ENCODE measurements at regions of chr11 and their contacts with region 1.

Region 1: GRCh38 chr11:67345920-67346799 is 7.2 kb downstream of the POLD4 start:
- DNase-seq: peak; percentile 92
- H3K4me3 ChIP-seq: no peak overlapping the region
- H3K27ac ChIP-seq: peak overlapping the region; percentile 77
- H3K4me1 ChIP-seq: peaks cover 21% of the 10 kb centered on the region
- H3K27me3 ChIP-seq: no peaks in the 10 kb centered on the region
- CTCF ChIP-seq: peak; percentile 79 to 97

Region 2: GRCh38 chr11:67303132-67303834 is 42.9 kb before region 1 on chr11 and contains the start of gene SSH3:
- CTCF ChIA-PET with region 1: no interaction called
- dilution Hi-C with region 1: loop called (anchors 5 kb)
- in situ Hi-C with region 1: no loop called
- intact Hi-C with region 1: no loop called
- DNase-seq: peak; percentile 70
- H3K4me3 ChIP-seq: peak within 1 kb of the TSS; percentile 81 to 96 (median 89)
- H3K27ac ChIP-seq: peak within 1 kb of the TSS; percentile 30
- H3K4me1 ChIP-seq: peaks cover 18% of the 10 kb centered on the region
- H3K27me3 ChIP-seq: no peaks in the 10 kb centered on the region
- CTCF ChIP-seq: no peak
- total RNA-seq, gene SSH3: 47.0 to 86.9 TPM

Region 3: GRCh38 chr11:67382276-67383136 is 36.3 kb after region 1 on chr11:
- CTCF ChIA-PET with region 1: interaction called, 11 read pairs
- dilution Hi-C with region 1: loop called (anchors 5 kb)
- in situ Hi-C with region 1: no loop called
- intact Hi-C with region 1: loop called (anchors 1 kb)
- DNase-seq: peak; percentile 58
- H3K4me3 ChIP-seq: no peak overlapping the region
- H3K27ac ChIP-seq: no peak overlapping the region
- H3K4me1 ChIP-seq: peaks cover 32% of the 10 kb centered on the region
- H3K27me3 ChIP-seq: no peaks in the 10 kb centered on the region
- CTCF ChIP-seq: peak; percentile 99 to 100

Region 4: DNA sequence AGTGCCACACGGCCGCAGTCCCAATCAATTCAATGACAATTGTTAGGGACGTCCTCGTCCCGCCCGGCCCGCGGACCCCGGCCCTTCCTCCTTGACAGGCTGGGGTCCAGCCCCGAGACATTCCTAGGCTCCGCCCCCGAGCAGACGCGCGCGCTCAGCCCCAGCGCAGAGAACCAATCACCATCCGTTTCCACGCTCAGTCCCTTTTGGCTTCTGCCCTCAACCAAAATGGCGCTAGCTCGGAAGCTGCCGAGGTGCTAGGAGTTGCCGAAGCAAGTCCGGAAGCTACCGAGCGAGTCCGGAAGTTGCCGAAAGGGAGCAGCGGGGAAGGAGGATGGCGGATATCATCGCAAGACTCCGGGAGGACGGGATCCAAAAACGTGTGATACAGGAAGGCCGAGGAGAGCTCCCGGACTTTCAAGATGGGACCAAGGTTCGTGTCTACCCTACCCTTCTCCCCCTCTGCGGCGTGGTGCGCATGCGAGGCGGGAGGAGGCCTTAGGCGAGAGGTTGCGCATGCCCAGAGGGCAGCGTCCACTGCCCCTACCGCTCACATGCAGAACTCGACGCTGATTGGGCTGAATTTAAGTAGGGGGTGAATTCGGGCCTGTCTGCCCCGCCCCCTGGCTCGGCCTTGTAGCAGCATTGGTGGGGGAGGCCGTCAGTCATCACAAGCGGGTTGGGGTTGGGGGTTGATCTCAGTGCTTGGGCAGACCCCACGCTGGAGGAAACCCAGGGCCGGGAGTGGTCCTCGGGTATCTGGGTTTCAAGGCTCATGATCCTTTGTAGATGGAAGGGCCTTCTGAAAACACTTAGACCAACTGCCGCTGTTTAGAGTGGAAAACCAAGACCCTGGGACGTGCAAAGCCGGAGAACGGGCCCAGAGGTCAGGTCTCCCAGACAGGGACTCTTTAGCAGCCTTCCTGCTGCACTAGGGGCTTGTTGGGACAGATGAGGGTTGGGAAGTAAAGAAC is 137.0 kb after region 1 on chr11 and contains the start of gene AIP:
- CTCF ChIA-PET with region 1: no interaction called
- dilution Hi-C with region 1: loop called (anchors 5 kb)
- in situ Hi-C with region 1: no loop called
- intact Hi-C with region 1: no loop called
- DNase-seq: peak; percentile 96
- H3K4me3 ChIP-seq: peak within 1 kb of the TSS; percentile 56 to 78 (median 73)
- H3K27ac ChIP-seq: peak within 1 kb of the TSS; percentile 66
- H3K4me1 ChIP-seq: peaks cover 12% of the 10 kb centered on the region
- H3K27me3 ChIP-seq: no peaks in the 10 kb centered on the region
- CTCF ChIP-seq: peak; percentile 5 to 34
- total RNA-seq, gene AIP: 34.5 to 36.2 TPM

Region 5: GRCh38 chr11:67606492-67607201 is 260.5 kb after region 1 on chr11 and contains the start of gene NDUFV1:
- CTCF ChIA-PET with region 1: no interaction called
- dilution Hi-C with region 1: no loop called
- in situ Hi-C with region 1: no loop called
- intact Hi-C with region 1: no loop called
- DNase-seq: peak; percentile 88
- H3K4me3 ChIP-seq: peak within 1 kb of the TSS; percentile 67 to 88 (median 72)
- H3K27ac ChIP-seq: peak within 1 kb of the TSS; percentile 67
- H3K4me1 ChIP-seq: peaks cover 3% of the 10 kb centered on the region
- H3K27me3 ChIP-seq: no peaks in the 10 kb centered on the region
- CTCF ChIP-seq: peak; percentile 20 to 68
- total RNA-seq, gene NDUFV1: 144 to 163 TPM

Measured in mammary epithelial cell (primary cell).